Colonic mucosa (tissue), 4 donors: ENCODE measurements at regions of chr15 and their contacts with region 1.

Region 1: DNA sequence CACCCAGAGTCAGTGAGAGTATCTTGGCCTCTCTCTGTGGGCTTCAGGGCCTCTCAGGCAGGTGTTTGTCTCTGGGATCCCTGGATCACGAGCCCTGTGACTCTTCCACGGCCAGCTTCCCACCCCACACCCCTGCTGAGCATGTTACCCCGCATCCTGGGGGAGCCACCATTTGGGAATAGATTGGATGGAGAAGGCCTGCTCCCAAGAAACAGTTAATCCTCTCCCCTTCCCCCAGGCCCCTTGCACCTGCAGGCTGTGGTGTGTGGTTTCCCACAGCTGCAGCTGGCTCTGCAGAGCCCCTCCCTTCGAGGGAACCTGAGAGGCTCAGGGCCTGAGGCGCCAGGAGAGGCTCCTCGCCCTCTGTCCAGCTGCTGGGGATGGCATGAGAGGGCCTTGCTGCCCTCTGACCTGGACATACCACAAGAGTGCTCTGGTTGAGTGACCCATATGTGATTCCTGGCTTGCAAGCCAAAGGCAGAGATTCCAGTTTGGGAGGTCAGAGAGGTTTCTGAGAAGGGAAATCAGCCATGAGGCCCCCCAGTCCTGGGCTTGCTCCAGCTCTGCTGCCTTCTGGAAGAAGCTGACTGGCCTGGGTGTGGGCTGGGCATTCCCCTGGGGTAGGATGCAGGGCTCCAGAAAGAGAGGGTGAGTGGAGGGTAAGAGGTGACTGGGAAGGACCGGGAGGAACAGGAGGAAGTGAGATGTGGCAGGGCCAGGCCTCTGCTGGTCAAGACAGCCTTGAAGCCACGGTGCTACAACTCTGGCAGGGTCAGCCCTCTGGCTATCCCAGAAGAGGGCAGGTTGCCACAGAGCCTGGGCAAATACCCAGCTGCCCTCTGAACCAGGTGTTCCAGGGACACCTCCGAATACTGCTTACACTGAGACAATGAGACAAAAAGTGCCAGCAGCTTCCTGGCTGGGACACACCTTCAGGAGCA is 15.9 kb upstream of the SRP14 start:
- DNase-seq: peak; percentile 58
- H3K4me3 ChIP-seq: no peak overlapping the region
- H3K27ac ChIP-seq: peak overlapping the region; percentile 34
- H3K4me1 ChIP-seq: peaks cover 23% of the 10 kb centered on the region
- H3K27me3 ChIP-seq: no peaks in the 10 kb centered on the region
- CTCF ChIP-seq: no peak

Region 2: DNA sequence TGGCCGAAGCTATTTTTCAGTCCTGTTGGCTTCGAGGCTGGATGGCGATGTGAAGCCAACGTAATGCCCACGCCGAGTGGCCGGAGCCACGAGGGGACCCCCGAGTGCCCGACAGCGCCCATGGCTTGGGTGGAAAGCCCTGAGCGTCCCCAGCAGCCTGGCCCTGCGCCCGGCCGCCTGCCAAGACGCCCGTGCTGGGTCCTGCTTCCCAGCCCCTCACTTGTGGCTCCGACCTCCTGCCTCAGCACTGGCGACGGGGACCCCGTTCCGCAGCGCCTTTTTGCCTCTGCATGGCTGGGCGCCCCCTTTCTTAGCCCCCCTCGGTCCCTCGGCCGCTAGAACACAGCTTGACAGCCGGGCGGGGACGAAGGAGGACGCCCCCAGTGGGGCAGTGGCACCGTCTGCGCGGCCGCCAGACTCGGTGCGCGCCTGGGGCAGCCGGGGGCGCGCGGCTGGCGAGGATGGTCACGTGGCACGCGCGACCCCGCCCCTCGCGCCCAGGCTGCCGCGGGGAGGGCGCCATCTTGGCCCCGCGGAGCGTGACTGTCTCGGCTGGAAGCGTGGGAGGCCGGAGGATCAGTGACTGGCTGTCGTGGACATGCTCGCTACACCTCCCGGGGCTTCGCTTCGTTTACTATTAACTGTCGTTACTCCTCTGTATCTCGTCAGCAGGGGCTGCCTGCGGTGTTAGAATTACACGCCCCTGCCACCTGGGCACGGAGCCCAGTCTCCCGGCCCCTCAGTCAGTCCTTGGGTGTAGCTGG is 134.2 kb before region 1 on chr15:
- intact Hi-C with region 1: no loop called
- DNase-seq: peak; percentile 75
- H3K4me3 ChIP-seq: peak overlapping the region; percentile 69
- H3K27ac ChIP-seq: peak overlapping the region; percentile 25
- H3K4me1 ChIP-seq: peaks cover 11% of the 10 kb centered on the region
- H3K27me3 ChIP-seq: peaks cover 14% of the 10 kb centered on the region
- CTCF ChIP-seq: no peak

Region 3: GRCh38 chr15:40108855-40109735 is 54.2 kb after region 1 on chr15 and contains the start of gene BMF:
- intact Hi-C with region 1: loop called (anchors 5 kb)
- DNase-seq: peak; percentile 100
- H3K4me3 ChIP-seq: peak within 1 kb of the TSS; percentile 57
- H3K27ac ChIP-seq: peak within 1 kb of the TSS; percentile 71
- H3K4me1 ChIP-seq: peaks cover 27% of the 10 kb centered on the region
- H3K27me3 ChIP-seq: no peaks in the 10 kb centered on the region
- CTCF ChIP-seq: no peak
- total RNA-seq, gene BMF: 5.0 to 11.6 TPM